Adrenal gland (tissue), 19 donors: ENCODE measurements at regions of chr10 and their contacts with region 1.

Region 1: GRCh38 chr10:63157845-63158624 is 24.9 kb downstream of the NRBF2 start:
- DNase-seq: peak in 5 of 7 donors; percentile 27 to 59 (median 50)
- H3K4me3 ChIP-seq: no peak overlapping the region
- H3K27ac ChIP-seq: no peak overlapping the region
- H3K4me1 ChIP-seq: peaks cover 3 to 8% of the 10 kb centered on the region in 2 donors
- H3K27me3 ChIP-seq: no peaks in the 10 kb centered on the region
- CTCF ChIP-seq: peak; percentile 76 to 82 (median 78)
- POLR2A ChIP-seq: no peak

Region 2: GRCh38 chr10:63005246-63005645 is 152.8 kb before region 1 on chr10:
- intact Hi-C with region 1: loop called in 1 of 2 experiments (anchors 5 kb)
- DNase-seq: no peak
- H3K4me3 ChIP-seq: no peak overlapping the region
- H3K27ac ChIP-seq: no peak overlapping the region
- H3K4me1 ChIP-seq: no peaks in the 10 kb centered on the region
- H3K27me3 ChIP-seq: no peaks in the 10 kb centered on the region
- CTCF ChIP-seq: no peak
- POLR2A ChIP-seq: no peak

Region 3: DNA sequence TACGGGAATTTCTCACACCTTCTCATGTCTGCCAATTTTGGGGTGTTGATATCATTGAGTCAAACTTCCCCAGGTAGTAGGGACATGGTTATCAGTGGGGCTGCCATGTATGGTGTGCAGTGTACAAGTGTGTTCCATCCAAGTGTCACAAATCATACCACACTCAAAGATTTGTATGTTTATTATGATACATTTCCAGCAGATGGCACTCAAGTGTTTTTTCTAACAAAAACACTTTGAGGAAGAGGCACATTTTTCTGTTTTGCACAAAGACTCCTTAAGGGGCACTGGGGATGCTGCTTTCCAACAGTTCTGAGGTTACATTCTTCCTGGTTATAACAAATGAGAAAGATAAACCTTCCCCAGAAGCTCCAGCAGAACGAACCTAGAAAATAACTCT is 777.7 kb after region 1 on chr10:
- intact Hi-C with region 1: no loop called
- DNase-seq: no peak
- H3K4me3 ChIP-seq: no peak overlapping the region
- H3K27ac ChIP-seq: no peak overlapping the region
- H3K4me1 ChIP-seq: no peaks in the 10 kb centered on the region
- H3K27me3 ChIP-seq: no peaks in the 10 kb centered on the region
- CTCF ChIP-seq: no peak
- POLR2A ChIP-seq: no peak